Naive thymus-derived CD4-positive, alpha-beta T cell (primary cell): ENCODE measurements at regions of chr18 and their contacts with region 1.

Region 1: DNA sequence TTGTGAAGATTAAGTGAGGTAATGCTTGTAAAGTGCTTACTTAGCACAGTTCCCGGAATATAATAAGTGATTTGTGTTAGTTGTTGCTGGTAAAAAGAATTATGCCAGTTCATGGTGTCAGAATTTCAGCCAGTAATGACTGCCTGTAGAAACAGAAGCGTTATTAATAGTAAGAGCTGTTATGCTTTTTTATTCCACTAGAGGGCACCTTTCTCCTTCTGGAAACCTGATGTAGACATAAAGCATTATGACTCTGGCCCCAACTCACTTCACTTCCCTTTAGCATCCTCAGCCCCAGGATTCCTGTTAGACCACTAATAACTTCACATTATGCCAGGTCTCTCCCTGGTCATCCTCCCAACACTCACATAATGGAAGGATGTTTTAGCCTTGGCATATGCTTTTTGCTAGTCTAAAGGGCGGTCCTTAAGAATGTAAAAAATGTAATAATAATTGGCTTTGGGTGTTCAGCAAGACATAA is 34.9 kb downstream of the C18orf54 start:
- DNase-seq: peak in 7 of 9 donors; percentile 5 to 55 (median 39)
- ATAC-seq: peak; percentile 80
- H3K4me3 ChIP-seq: no peak overlapping the region
- H3K4me3 Mint-ChIP-seq: no peak overlapping the region
- H3K27ac ChIP-seq: no peak overlapping the region
- H3K27ac Mint-ChIP-seq: no peak overlapping the region
- H3K4me1 ChIP-seq: no peaks in the 10 kb centered on the region
- H3K4me1 Mint-ChIP-seq: peaks cover 0 to 37% (median 0%) of the 10 kb centered on the region in 7 donors
- H3K27me3 ChIP-seq: no peaks in the 10 kb centered on the region
- H3K27me3 Mint-ChIP-seq: peaks cover 9 to 29% (median 16%) of the 10 kb centered on the region in 5 donors

Region 2: GRCh38 chr18:54647176-54647575 is 254.6 kb after region 1 on chr18:
- CTCF ChIA-PET with region 1: no interaction called
- POLR2A ChIA-PET with region 1: no interaction called
- intact Hi-C with region 1: loop called in 1 of 2 experiments (anchors 1 kb)
- DNase-seq: no peak
- ATAC-seq: no peak
- H3K4me3 ChIP-seq: no peak overlapping the region
- H3K4me3 Mint-ChIP-seq: no peak overlapping the region
- H3K27ac ChIP-seq: no peak overlapping the region
- H3K27ac Mint-ChIP-seq: no peak overlapping the region
- H3K4me1 ChIP-seq: no peaks in the 10 kb centered on the region
- H3K4me1 Mint-ChIP-seq: no peaks in the 10 kb centered on the region
- H3K27me3 ChIP-seq: no peaks in the 10 kb centered on the region
- H3K27me3 Mint-ChIP-seq: peaks cover 6 to 21% (median 15%) of the 10 kb centered on the region in 5 donors